HCT116 (cell line): ENCODE measurements at regions of chr2 and their contacts with region 1.

Region 1: GRCh38 chr2:176454893-176455811 is 185.9 kb downstream of the MTX2 start:
- DNase-seq: peak; percentile 45
- ATAC-seq: peak; percentile 90
- H3K4me3 ChIP-seq: no peak overlapping the region
- H3K27ac ChIP-seq: no peak overlapping the region
- H3K4me1 ChIP-seq: 0 out of 4 replicates have a peak, but pooled peaks cover 0 to 3% of the 10 kb centered on the region in 2 experiments
- H3K27me3 ChIP-seq: no peaks in the 10 kb centered on the region
- CTCF ChIP-seq: peak; percentile 85 to 91 (median 85)
- POLR2A ChIP-seq: no peak
- RAD21 ChIP-seq: peak; percentile 86

Region 2: DNA sequence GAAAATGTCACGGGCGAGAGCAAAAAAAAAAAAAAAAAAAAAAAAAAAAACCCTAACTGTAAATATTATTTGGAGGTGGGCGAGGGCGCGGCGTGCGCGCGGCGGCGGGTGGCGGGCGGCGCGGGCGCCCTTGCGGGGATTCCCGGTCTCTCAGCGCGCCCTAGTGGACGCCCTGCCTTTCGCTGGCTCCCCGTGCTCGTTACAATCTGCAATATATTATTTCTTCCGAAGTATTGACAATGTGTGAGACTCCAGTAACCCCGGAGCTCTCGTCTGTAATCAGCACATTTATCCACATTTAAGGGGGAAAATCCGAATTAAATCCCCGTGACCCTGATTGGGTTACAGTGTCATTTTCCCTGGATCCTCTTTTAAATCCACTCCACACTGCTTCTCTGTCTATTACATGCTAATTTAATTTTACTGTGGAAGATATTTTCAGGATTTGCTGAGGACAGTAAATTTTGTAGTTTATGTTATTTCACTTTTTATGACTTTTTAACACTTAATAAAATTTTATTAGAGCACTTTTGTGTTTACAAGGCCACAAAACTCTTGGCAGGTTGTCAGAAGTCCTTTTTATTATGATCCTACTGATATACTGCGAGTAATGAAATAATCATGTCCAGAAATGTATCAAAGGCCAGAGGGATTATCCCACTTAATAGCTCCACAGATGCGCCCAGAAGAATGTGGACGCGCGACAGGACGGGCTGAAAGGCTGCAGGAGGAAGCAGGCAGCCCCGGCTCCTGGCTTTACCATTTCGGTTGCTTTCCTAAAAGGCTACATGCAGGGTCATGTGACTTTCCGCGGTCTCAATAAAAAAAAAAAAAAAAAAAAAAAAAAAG is 183.2 kb after region 1 on chr2:
- CTCF ChIA-PET with region 1: interaction called, 12 read pairs
- POLR2A ChIA-PET with region 1: no interaction called
- RAD21 ChIA-PET with region 1: interaction called in 1 of 2 experiments, 4 read pairs
- intact Hi-C with region 1: loop called (anchors 2 kb)
- DNase-seq: no peak
- ATAC-seq: peak; percentile 91
- H3K4me3 ChIP-seq: peak overlapping the region; percentile 10 to 31; a peak in 3 of 4 replicates
- H3K27ac ChIP-seq: no peak overlapping the region
- H3K4me1 ChIP-seq: peaks cover 0 to 9% of the 10 kb centered on the region in 2 experiments; a peak in 1 of 4 replicates
- H3K27me3 ChIP-seq: no peaks in the 10 kb centered on the region
- CTCF ChIP-seq: peak; percentile 53 to 89 (median 54)
- POLR2A ChIP-seq: no peak
- RAD21 ChIP-seq: peak; percentile 84

Region 3: GRCh38 chr2:176814306-176815052 is 359.3 kb after region 1 on chr2:
- CTCF ChIA-PET with region 1: no interaction called
- POLR2A ChIA-PET with region 1: no interaction called
- RAD21 ChIA-PET with region 1: no interaction called
- intact Hi-C with region 1: loop called (anchors 10 kb)
- DNase-seq: peak; percentile 12
- ATAC-seq: peak; percentile 69
- H3K4me3 ChIP-seq: no peak overlapping the region
- H3K27ac ChIP-seq: no peak overlapping the region
- H3K4me1 ChIP-seq: no peaks in the 10 kb centered on the region
- H3K27me3 ChIP-seq: 0 out of 2 replicates have a peak, but pooled peaks cover 9% of the 10 kb centered on the region
- CTCF ChIP-seq: peak; percentile 25 to 61 (median 40); a peak in 3 of 6 replicates
- POLR2A ChIP-seq: no peak
- RAD21 ChIP-seq: peak; percentile 70